Naive thymus-derived CD4-positive, alpha-beta T cell (primary cell): ENCODE measurements at regions of chr12 and their contacts with region 1.

Region 1: DNA sequence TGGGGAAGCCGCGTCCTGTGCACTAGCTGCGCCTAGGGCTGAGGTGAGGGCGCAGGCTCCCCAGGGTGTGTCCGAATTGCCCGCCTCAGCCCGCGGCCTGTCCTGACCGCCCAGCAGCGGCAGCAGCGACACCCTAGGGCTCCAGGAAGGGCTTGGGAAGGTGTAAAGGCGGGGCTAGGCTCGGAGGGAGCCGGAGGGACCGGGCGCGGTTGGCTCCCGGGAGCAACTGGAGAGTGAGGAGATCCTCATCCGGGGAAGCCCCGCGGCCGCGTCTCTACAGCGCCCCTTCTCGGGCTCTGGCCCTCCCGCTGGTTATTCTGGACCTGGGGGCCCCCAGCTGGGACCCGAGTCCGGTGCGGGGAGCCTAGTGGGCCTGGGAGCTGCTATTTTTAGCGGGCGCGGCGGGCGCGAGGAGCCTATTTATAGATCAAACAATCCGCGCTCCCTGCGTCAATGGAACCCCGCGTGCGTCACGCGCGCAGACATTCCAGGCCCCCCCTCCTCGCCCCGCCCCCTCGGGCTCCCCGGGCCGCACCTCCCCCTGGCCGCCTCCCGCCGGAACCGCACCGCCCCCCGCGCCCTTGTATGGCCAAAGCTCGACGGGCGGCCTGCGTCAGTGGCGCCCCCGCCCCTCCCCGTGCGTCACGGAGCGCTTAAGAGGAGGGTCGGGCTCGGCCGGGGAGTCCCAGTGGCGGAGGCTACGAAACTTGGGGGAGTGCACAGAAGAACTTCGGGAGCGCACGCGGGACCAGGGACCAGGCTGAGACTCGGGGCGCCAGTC is at the start of gene NR4A1:
- DNase-seq: peak; percentile 98 to 100 (median 99)
- ATAC-seq: peak; percentile 96
- H3K4me3 ChIP-seq: peak within 1 kb of the TSS; percentile 71
- H3K4me3 Mint-ChIP-seq: peak within 1 kb of the TSS; percentile 90 to 98 (median 94)
- H3K27ac ChIP-seq: peak within 1 kb of the TSS; percentile 93
- H3K27ac Mint-ChIP-seq: peak within 1 kb of the TSS; percentile 59 to 100 (median 99)
- H3K4me1 ChIP-seq: peaks cover 21 to 22% of the 10 kb centered on the region in 2 donors
- H3K4me1 Mint-ChIP-seq: peaks cover 23 to 41% (median 37%) of the 10 kb centered on the region in 7 donors
- H3K27me3 ChIP-seq: no peaks in the 10 kb centered on the region
- H3K27me3 Mint-ChIP-seq: peaks cover 0 to 9% (median 0%) of the 10 kb centered on the region in 5 donors
- total RNA-seq, gene NR4A1: 0.89 to 279 (median 7.1) TPM

Region 2: DNA sequence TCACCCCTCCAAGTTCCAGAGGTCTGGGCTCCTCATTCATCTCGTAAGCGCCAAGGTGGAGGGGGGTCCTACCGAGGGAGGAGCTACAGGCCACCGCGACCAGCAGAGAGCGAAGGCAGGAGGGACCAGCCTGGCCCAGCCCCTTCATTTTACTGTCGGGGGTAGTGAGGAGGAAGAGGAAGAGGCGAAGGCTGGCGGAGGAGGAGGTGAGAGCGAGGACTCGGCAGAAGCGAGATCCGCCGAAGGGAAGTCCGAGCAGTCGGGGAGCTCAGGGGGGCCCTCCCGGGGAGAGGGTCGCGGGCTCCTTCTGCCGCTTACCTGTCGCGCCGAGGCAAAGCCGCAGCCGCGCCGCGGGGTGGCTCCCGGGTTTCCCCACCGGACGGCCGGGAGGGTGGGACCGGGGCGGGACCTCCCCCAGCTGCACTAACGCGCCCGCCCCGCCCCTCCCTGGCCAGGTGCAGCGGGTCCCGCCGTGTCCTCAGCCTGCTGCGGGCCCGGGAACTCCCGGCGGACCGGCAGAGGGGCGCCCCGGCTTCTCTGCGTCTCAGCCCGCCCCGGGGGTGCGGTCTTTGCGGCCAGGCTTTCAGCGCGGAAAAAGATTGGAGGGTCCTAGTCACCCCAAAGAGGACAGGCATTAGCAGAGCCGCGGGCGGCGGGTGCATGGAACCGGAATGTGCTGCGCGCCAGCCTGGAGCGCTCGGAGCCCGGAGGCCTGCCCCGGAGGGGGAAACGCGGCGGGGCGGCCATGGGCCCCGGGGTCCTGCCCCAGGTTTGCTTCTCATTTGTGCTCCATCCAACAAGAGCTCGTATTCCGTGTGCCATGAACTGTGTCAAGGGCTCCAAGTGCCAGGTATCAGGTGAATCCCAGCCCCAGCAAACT is 659.4 kb before region 1 on chr12 and contains the start of gene GALNT6:
- CTCF ChIA-PET with region 1: no interaction called
- POLR2A ChIA-PET with region 1: no interaction called
- intact Hi-C with region 1: loop called in 1 of 2 experiments (anchors 10 kb)
- DNase-seq: peak; percentile 50 to 74 (median 61)
- ATAC-seq: peak; percentile 76
- H3K4me3 ChIP-seq: peak within 1 kb of the TSS; percentile 67
- H3K4me3 Mint-ChIP-seq: peak within 1 kb of the TSS; percentile 77 to 96 (median 92)
- H3K27ac ChIP-seq: peak within 1 kb of the TSS; percentile 83
- H3K27ac Mint-ChIP-seq: peak within 1 kb of the TSS; percentile 84 to 96 (median 90)
- H3K4me1 ChIP-seq: peaks cover 50 to 68% of the 10 kb centered on the region in 2 donors
- H3K4me1 Mint-ChIP-seq: peaks cover 67 to 87% (median 74%) of the 10 kb centered on the region in 7 donors
- H3K27me3 ChIP-seq: no peaks in the 10 kb centered on the region
- H3K27me3 Mint-ChIP-seq: peaks cover 0 to 8% (median 0%) of the 10 kb centered on the region in 5 donors
- total RNA-seq, gene GALNT6: 2.5 to 19.5 (median 13.4) TPM

Region 3: GRCh38 chr12:52004042-52004648 is 46.8 kb before region 1 on chr12:
- CTCF ChIA-PET with region 1: no interaction called
- POLR2A ChIA-PET with region 1: interaction called, 4 read pairs
- intact Hi-C with region 1: loop called (anchors 1 to 2 kb)
- DNase-seq: no peak
- ATAC-seq: no peak
- H3K4me3 ChIP-seq: no peak overlapping the region
- H3K4me3 Mint-ChIP-seq: no peak overlapping the region
- H3K27ac ChIP-seq: no peak overlapping the region
- H3K27ac Mint-ChIP-seq: peak overlapping the region in 2 of 9 donors; percentile 24 to 67
- H3K4me1 ChIP-seq: peaks cover 0 to 11% of the 10 kb centered on the region in 2 donors
- H3K4me1 Mint-ChIP-seq: peaks cover 6 to 27% (median 19%) of the 10 kb centered on the region in 7 donors
- H3K27me3 ChIP-seq: no peaks in the 10 kb centered on the region
- H3K27me3 Mint-ChIP-seq: peaks cover 0 to 45% (median 0%) of the 10 kb centered on the region in 5 donors

Region 4: DNA sequence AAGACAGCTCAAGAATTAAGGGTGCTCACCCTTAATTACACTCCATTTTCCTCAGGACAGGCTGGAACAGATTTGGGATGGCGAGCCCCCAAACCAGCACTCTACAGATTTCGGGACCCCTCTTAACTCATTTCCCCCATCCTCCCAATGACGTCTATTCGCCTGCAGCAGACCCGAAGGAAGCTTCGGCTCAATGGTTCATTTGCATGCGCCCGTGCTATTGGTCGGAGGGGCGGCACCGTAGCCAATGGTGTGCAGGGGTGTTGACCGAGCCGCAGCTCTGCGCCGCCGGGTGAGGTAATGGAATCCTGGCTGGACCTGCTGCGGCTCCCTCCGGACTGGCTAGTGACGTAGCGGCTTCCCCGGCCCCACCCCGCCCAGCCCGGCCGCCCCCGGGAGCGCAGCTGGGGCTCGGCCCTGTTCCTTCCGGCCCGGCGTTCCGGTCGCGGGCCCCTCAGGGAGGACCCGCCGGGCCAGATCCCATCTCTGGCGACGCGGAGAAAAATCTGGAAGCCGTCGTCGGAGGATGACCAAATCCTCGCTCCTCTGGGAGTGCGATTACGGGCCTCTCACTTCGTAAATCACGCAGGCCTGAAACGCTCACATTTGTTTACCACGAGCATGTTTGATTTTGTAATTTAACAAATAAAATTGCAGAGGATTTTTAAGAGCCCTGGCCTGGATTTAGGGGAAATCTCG is 18.0 kb before region 1 on chr12:
- CTCF ChIA-PET with region 1: interaction called, 3 read pairs
- POLR2A ChIA-PET with region 1: interaction called, 10 read pairs
- intact Hi-C with region 1: loop called (anchors 1 kb)
- DNase-seq: peak; percentile 68 to 93 (median 80)
- ATAC-seq: peak; percentile 90
- H3K4me3 ChIP-seq: peak overlapping the region; percentile 24
- H3K4me3 Mint-ChIP-seq: peak overlapping the region; percentile 72 to 89 (median 82)
- H3K27ac ChIP-seq: peak overlapping the region; percentile 77
- H3K27ac Mint-ChIP-seq: peak overlapping the region; percentile 36 to 97 (median 95)
- H3K4me1 ChIP-seq: peaks cover 18 to 20% of the 10 kb centered on the region in 2 donors
- H3K4me1 Mint-ChIP-seq: peaks cover 13 to 40% (median 29%) of the 10 kb centered on the region in 7 donors
- H3K27me3 ChIP-seq: no peaks in the 10 kb centered on the region
- H3K27me3 Mint-ChIP-seq: peaks cover 0 to 28% (median 0%) of the 10 kb centered on the region in 5 donors

Region 5: DNA sequence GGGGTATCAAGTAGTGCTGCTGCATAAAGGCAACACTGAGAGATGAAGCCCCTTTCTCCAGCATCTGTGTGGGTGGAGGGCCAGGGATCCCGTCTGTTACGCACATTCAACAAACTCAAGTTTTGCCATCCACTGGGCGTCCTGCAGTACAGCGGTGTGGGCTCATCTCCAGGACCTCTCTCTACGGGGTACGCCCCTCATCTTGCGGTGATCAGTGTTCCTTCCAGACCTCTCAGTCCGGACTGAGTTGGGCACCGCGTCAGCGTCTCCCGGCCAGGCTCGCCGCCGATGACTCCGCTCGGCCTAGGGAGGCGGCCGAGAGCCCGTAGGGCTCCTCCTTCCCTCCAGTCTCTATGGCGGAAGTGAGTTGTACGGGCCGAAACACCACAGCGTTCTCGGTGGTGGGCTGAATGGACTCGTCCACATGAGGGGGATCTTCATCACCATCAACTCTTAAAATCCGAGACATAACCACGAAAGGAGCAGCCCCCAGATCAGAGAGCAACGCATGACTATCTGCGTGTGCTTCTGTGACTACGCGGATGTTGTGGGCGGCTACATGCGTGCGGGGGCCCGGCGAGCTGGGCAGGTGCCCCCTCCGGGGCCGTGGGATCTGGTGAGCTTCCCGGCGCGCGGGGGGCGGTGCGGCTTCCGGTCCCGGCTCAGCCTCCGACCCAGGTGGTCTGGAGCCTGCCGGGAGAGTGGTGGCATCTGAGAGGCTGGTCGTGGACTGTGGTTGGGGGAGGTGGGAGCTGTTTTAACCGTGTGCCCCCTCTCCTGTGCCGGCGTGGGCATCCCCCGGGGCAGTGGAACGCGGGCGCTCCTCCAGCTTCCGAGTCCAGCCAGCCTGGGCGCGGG is 18.6 kb after region 1 on chr12 and contains the start of gene ATG101:
- CTCF ChIA-PET with region 1: interaction called, 4 read pairs
- POLR2A ChIA-PET with region 1: interaction called, 13 read pairs
- intact Hi-C with region 1: loop called (anchors 1 kb)
- DNase-seq: peak; percentile 80 to 92 (median 89)
- ATAC-seq: peak; percentile 97
- H3K4me3 ChIP-seq: peak within 1 kb of the TSS; percentile 96
- H3K4me3 Mint-ChIP-seq: peak within 1 kb of the TSS; percentile 88 to 99 (median 96)
- H3K27ac ChIP-seq: peak within 1 kb of the TSS; percentile 87
- H3K27ac Mint-ChIP-seq: peak within 1 kb of the TSS; percentile 97 to 100 (median 98)
- H3K4me1 ChIP-seq: peaks cover 19 to 31% of the 10 kb centered on the region in 2 donors
- H3K4me1 Mint-ChIP-seq: peaks cover 35 to 59% (median 49%) of the 10 kb centered on the region in 7 donors
- H3K27me3 ChIP-seq: no peaks in the 10 kb centered on the region
- H3K27me3 Mint-ChIP-seq: peaks cover 0 to 5% (median 0%) of the 10 kb centered on the region in 5 donors
- total RNA-seq, gene ATG101: 20.7 to 39.7 (median 34.3) TPM

Region 6: DNA sequence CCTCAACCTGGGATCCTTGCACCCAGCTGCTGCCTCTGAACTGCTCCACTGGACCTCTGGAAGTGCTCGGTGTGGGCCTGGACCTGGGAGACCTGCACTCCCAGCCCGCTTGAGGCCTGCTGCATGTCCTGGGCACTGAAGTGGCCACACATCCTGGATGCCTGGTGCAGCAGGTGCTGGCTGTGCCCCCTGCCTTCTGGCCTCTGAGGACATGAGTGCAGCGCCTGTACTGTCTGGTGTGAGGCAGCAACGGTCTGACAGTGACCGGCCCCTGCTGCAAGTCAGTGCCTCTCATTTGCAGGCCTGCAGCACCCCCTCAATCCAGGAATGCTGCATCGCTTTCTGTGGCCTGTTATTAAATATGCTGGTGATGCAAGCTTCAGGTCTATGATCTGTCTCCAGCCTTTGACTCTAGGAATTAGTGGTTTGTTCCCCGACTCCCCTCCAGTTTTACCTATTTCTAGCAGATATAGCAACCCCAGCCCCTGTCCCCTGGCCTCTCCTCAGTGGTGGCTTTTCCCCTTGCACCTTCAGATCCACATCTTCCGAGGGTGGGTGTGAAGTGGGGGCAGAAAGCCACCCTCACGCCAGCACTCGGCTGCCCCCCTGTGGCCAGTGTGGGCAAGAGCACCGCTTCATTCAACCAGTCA is 32.2 kb after region 1 on chr12:
- CTCF ChIA-PET with region 1: interaction called, 6 read pairs
- POLR2A ChIA-PET with region 1: interaction called, 6 read pairs
- intact Hi-C with region 1: loop called in 1 of 2 experiments (anchors 1 kb)
- DNase-seq: peak; percentile 49 to 74 (median 66)
- ATAC-seq: peak; percentile 86
- H3K4me3 ChIP-seq: no peak overlapping the region
- H3K4me3 Mint-ChIP-seq: peak overlapping the region in 2 of 10 donors; percentile 17 to 52
- H3K27ac ChIP-seq: no peak overlapping the region
- H3K27ac Mint-ChIP-seq: peak overlapping the region in 4 of 9 donors; percentile 47 to 83 (median 72)
- H3K4me1 ChIP-seq: peaks cover 0 to 12% of the 10 kb centered on the region in 2 donors
- H3K4me1 Mint-ChIP-seq: peaks cover 6 to 17% (median 12%) of the 10 kb centered on the region in 7 donors
- H3K27me3 ChIP-seq: no peaks in the 10 kb centered on the region
- H3K27me3 Mint-ChIP-seq: peaks cover 4 to 14% (median 10%) of the 10 kb centered on the region in 5 donors